GM18951 (cell line): ENCODE measurements at regions of chr14 and their contacts with region 1.

Region 1: GRCh38 chr14:51157012-51157411 is 62.1 kb upstream of the TRIM9 start:
- POLR2A ChIP-seq: no peak

Region 2: GRCh38 chr14:51219473-51220448 is 62.7 kb after region 1 on chr14:
- in situ Hi-C with region 1: loop called (anchors 10 kb)
- POLR2A ChIP-seq: no peak